ENCODE measurements at regions of chr6 and their contacts with region 1.

Region 1: GRCh38 chr6:131015630-131016263 is 47.3 kb downstream of the EPB41L2 start:
- DNase-seq: no peak
- H3K4me3 Mint-ChIP-seq: peak overlapping the region; percentile 20
- H3K27ac Mint-ChIP-seq: peak overlapping the region; percentile 40
- H3K4me1 Mint-ChIP-seq: peaks cover 57% of the 10 kb centered on the region
- H3K27me3 Mint-ChIP-seq: no peaks in the 10 kb centered on the region
- CTCF ChIP-seq: no peak

Region 2: GRCh38 chr6:130873746-130874145 is 142.0 kb before region 1 on chr6:
- CTCF ChIA-PET with region 1: no interaction called
- intact Hi-C with region 1: no loop called
- DNase-seq: no peak
- H3K4me3 Mint-ChIP-seq: no peak overlapping the region
- H3K27ac Mint-ChIP-seq: no peak overlapping the region
- H3K4me1 Mint-ChIP-seq: no peaks in the 10 kb centered on the region
- H3K27me3 Mint-ChIP-seq: no peaks in the 10 kb centered on the region
- CTCF ChIP-seq: no peak

Region 3: DNA sequence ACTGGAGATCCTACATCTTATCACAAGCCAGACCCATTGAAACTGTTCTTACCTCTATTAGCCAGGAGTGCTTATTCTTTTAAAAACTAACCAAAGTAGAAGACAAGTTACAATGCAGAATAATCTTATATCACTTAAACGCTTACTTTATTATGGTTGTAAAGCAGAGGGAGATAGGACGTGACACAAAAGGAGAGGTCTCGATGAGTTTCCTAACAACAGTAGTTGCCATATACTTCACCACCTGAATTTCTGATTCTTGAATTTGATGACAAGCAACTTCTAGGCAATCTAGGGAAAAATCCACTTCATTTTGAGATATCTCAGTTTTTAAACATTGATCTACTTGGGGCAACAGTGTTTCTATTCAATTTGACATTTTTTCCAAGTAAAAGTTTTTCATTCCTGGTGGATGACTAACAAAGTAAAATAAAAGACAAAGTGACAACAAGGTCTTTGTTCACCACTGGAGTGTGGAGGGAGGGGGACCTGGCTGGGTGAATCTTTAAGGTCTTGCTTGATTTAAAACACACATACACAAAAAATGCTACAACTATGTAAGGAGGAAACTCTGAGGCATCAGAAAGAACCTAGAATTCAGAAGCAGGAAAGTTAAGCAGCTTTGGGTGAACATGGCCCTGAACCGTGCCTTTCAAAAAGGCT is 77.7 kb before region 1 on chr6:
- CTCF ChIA-PET with region 1: no interaction called
- intact Hi-C with region 1: loop called (anchors 5 kb)
- DNase-seq: peak; percentile 66
- H3K4me3 Mint-ChIP-seq: peak overlapping the region; percentile 14
- H3K27ac Mint-ChIP-seq: peak overlapping the region; percentile 83
- H3K4me1 Mint-ChIP-seq: peaks cover 57% of the 10 kb centered on the region
- H3K27me3 Mint-ChIP-seq: no peaks in the 10 kb centered on the region
- CTCF ChIP-seq: no peak

Region 4: GRCh38 chr6:130997061-130997753 is 18.5 kb before region 1 on chr6:
- CTCF ChIA-PET with region 1: no interaction called
- intact Hi-C with region 1: loop called (anchors 2 kb)
- DNase-seq: no peak
- H3K4me3 Mint-ChIP-seq: no peak overlapping the region
- H3K27ac Mint-ChIP-seq: no peak overlapping the region
- H3K4me1 Mint-ChIP-seq: peaks cover 57% of the 10 kb centered on the region
- H3K27me3 Mint-ChIP-seq: no peaks in the 10 kb centered on the region
- CTCF ChIP-seq: no peak

Measured in Calu3 (cell line).